ENCODE measurements at regions of chr9 and their contacts with region 1.

Region 1: GRCh38 chr9:6584881-6585597 is 60.5 kb downstream of the GLDC start:
- H3K4me3 Mint-ChIP-seq: no peak overlapping the region
- H3K27ac Mint-ChIP-seq: no peak overlapping the region
- H3K4me1 Mint-ChIP-seq: peaks cover 13% of the 10 kb centered on the region
- H3K27me3 Mint-ChIP-seq: no peaks in the 10 kb centered on the region

Region 2: DNA sequence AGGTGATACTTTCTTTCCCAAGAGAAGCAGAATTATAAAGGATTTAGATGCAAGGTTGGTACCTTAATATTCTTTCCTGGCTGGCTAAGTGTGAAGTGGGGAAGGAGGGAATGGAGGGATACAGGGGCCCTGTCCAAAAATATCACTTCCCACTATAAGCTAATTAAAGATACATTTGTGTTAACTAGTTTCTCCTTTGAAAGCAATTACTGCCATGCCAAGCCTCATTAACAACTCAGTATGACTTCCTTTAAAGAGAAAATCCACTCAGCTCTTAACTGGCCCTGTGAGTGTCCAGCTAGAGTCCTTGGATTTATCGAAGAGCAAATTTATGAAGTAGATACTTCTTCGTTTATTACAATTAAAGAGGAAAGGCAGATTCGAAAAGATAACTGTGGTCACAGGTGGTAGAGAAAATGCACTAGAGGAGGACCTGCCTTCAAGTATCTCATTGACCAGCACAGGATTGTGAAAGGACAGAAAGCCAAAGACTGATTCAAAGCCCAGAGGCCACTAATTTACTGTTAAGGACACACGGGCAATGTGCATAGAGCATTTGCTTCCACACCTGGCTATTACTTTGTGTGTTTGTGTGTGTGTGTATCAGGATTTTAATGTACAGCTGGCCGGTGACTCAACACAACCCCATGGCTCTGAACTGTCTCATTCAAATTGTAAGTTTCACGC is 71.7 kb after region 1 on chr9:
- intact Hi-C with region 1: no loop called
- H3K4me3 Mint-ChIP-seq: no peak overlapping the region
- H3K27ac Mint-ChIP-seq: no peak overlapping the region
- H3K4me1 Mint-ChIP-seq: no peaks in the 10 kb centered on the region
- H3K27me3 Mint-ChIP-seq: peaks cover 23% of the 10 kb centered on the region

Region 3: DNA sequence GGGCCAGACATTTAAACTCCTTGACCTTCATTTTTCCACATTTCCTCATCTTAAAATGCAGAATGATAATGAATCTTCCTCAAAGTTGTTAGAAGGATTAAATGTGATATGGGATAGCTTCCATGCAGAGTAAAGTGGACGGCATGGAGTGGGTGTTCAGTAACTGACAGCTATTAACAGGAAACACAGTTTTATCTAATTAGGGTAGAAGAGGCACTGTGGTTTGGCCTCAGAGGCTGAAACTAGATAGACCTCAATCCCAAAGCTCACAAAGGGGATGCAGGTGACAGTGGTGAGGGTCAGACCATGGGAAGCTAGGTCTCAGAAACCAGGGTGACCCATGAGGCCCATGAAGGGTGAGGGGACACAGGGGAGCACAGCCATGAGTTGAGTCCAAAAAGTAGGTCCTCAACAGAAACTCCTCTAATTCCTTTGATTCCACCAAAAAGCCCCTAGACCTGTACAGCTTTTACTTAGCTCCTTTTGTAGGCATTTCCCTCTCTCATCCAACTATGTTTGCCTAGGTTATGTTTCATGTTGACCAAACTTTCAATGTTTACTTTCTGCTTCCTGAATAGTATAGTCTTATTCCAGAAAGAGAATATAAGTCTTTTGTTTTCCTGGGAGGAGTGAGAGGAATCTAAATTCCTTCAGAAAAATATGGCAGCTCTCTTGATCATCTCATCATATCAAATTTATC is 88.4 kb after region 1 on chr9:
- intact Hi-C with region 1: loop called (anchors 5 kb)
- H3K4me3 Mint-ChIP-seq: no peak overlapping the region
- H3K27ac Mint-ChIP-seq: no peak overlapping the region
- H3K4me1 Mint-ChIP-seq: no peaks in the 10 kb centered on the region
- H3K27me3 Mint-ChIP-seq: no peaks in the 10 kb centered on the region

Measured in dendritic cell treated with granulocyte-macrophage colony-stimulating factor and Interleukin-4, amounts not matched to agents 40 ng/mL and 50 ng/mL, for 4 days (primary cell).